ENCODE measurements at regions of chr19 and their contacts with region 1.

Region 1: GRCh38 chr19:2096480-2097329 is at the start of gene IZUMO4:
- DNase-seq: peak; percentile 93 to 99
- H3K4me3 ChIP-seq: peak within 1 kb of the TSS; percentile 75 to 83
- H3K27ac ChIP-seq: peak within 1 kb of the TSS; percentile 94 to 95
- H3K4me1 ChIP-seq: peaks cover 12 to 19% of the 10 kb centered on the region in 2 donors
- H3K27me3 ChIP-seq: no peaks in the 10 kb centered on the region
- CTCF ChIP-seq: peak; percentile 27 to 64 (median 55)
- total RNA-seq, gene IZUMO4: not detected

Region 2: GRCh38 chr19:1929021-1929742 is 167.5 kb before region 1 on chr19:
- intact Hi-C with region 1: no loop called
- DNase-seq: peak in 1 of 2 donors; percentile 90
- H3K4me3 ChIP-seq: peak overlapping the region; percentile 36 to 59
- H3K27ac ChIP-seq: no peak overlapping the region
- H3K4me1 ChIP-seq: peaks cover 3 to 9% of the 10 kb centered on the region in 2 donors
- H3K27me3 ChIP-seq: no peaks in the 10 kb centered on the region
- CTCF ChIP-seq: peak; percentile 90 to 93 (median 92)

Region 3: GRCh38 chr19:2050991-2051772 is 45.5 kb before region 1 on chr19 and contains the start of gene MKNK2:
- intact Hi-C with region 1: loop called (anchors 2 kb)
- DNase-seq: peak in 1 of 2 donors; percentile 93
- H3K4me3 ChIP-seq: peak within 1 kb of the TSS; percentile 98
- H3K27ac ChIP-seq: peak within 1 kb of the TSS; percentile 92 to 97
- H3K4me1 ChIP-seq: peaks cover 46% of the 10 kb centered on the region in 2 donors
- H3K27me3 ChIP-seq: no peaks in the 10 kb centered on the region
- CTCF ChIP-seq: peak; percentile 41 to 63 (median 48)
- total RNA-seq, gene MKNK2: 228 TPM

Region 4: GRCh38 chr19:2151339-2152229 is 54.9 kb after region 1 on chr19 and contains the start of gene AP3D1:
- intact Hi-C with region 1: loop called (anchors 1 kb)
- DNase-seq: peak; percentile 99 to 100
- H3K4me3 ChIP-seq: peak within 1 kb of the TSS; percentile 82 to 96
- H3K27ac ChIP-seq: peak within 1 kb of the TSS; percentile 83 to 87
- H3K4me1 ChIP-seq: peaks cover 14 to 31% of the 10 kb centered on the region in 2 donors
- H3K27me3 ChIP-seq: no peaks in the 10 kb centered on the region
- CTCF ChIP-seq: peak in 1 of 3 experiments; percentile 38
- total RNA-seq, gene AP3D1: 98.8 TPM

Region 5: GRCh38 chr19:2269244-2269947 is 172.7 kb after region 1 on chr19:
- intact Hi-C with region 1: loop called (anchors 1 kb)
- DNase-seq: peak; percentile 91 to 99
- H3K4me3 ChIP-seq: peak overlapping the region; percentile 95 to 96
- H3K27ac ChIP-seq: peak overlapping the region; percentile 99 to 100
- H3K4me1 ChIP-seq: peaks cover 17 to 41% of the 10 kb centered on the region in 2 donors
- H3K27me3 ChIP-seq: no peaks in the 10 kb centered on the region
- CTCF ChIP-seq: peak in 1 of 3 experiments; percentile 51

Region 6: DNA sequence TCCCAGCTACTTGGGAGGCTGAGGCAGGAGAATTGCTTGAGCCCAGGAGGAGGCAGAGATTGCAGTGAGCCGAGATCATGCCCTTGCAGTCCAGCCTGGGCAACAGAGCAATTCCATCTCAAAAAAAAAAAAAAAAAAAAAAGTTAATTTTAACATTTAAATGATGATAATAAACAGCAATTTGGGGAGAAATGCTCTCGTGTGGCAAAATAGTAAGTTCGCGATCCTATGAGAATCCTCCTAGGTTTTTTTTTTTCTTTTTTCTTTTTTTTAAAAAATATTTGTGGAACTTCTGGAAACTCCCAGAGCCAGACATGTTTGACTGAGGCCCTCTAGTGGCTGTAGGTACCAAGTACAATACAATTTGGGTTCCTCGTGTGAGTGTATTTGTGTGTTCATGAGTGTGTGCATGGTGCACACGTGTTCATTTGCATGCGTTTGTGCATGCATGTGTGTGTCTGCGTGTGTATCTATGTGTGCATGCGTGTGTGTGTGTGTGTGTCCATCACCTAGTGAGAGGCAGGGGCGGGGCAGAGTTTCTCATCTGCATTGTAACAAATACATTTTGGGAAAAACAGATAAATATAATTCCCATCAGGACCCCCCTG is 294.5 kb after region 1 on chr19:
- intact Hi-C with region 1: loop called (anchors 5 kb)
- DNase-seq: no peak
- H3K4me3 ChIP-seq: no peak overlapping the region
- H3K27ac ChIP-seq: no peak overlapping the region
- H3K4me1 ChIP-seq: no peaks in the 10 kb centered on the region
- H3K27me3 ChIP-seq: no peaks in the 10 kb centered on the region
- CTCF ChIP-seq: peak; percentile 62 to 83 (median 74)